Heart right ventricle (tissue), 16 donors: ENCODE measurements at regions of chr6 and their contacts with region 1.

Region 1: GRCh38 chr6:41779793-41780545 is at the start of gene FRS3:
- DNase-seq: peak; percentile 98 to 100
- ATAC-seq: peak; percentile 92 to 97 (median 94)
- H3K4me3 ChIP-seq: peak within 1 kb of the TSS; percentile 65 to 99 (median 90)
- H3K27ac ChIP-seq: peak within 1 kb of the TSS; percentile 66 to 99 (median 94)
- H3K4me1 ChIP-seq: peaks cover 11 to 59% (median 35%) of the 10 kb centered on the region in 9 donors
- H3K27me3 ChIP-seq: no peaks in the 10 kb centered on the region
- CTCF ChIP-seq: peak; percentile 87 to 98 (median 94)
- total RNA-seq, gene FRS3: 4.1 to 8.7 (median 5.8) TPM

Region 2: DNA sequence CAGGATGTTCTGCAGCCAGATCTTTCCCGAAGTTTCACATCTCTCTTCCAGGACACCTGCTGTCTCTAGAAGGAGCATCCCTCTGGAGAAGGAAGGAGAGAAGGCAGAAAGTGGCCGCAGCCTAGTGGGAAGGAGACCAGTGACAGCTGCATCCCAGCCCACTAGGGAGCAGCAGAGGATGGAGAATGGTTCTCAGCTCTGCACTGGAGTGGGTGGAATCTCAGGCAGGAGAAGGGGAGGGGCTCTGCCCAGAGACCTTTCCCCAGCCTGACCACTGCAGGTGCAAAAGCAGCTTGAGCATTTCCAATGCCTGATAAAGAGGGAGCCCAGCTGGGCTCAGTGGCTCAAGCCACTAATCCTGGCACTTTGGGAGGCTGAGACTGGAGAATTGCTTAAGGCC is 412.3 kb before region 1 on chr6:
- intact Hi-C with region 1: loop called in 5 of 10 experiments (anchors 5 to 10 kb)
- DNase-seq: peak; percentile 25 to 56
- ATAC-seq: peak in 7 of 8 donors; percentile 59 to 80 (median 76)
- H3K4me3 ChIP-seq: no peak overlapping the region
- H3K27ac ChIP-seq: no peak overlapping the region
- H3K4me1 ChIP-seq: peaks cover 0 to 26% (median 16%) of the 10 kb centered on the region in 9 donors
- H3K27me3 ChIP-seq: peaks cover 0 to 96% (median 66%) of the 10 kb centered on the region in 7 donors
- CTCF ChIP-seq: peak; percentile 20 to 76 (median 59)

Region 3: DNA sequence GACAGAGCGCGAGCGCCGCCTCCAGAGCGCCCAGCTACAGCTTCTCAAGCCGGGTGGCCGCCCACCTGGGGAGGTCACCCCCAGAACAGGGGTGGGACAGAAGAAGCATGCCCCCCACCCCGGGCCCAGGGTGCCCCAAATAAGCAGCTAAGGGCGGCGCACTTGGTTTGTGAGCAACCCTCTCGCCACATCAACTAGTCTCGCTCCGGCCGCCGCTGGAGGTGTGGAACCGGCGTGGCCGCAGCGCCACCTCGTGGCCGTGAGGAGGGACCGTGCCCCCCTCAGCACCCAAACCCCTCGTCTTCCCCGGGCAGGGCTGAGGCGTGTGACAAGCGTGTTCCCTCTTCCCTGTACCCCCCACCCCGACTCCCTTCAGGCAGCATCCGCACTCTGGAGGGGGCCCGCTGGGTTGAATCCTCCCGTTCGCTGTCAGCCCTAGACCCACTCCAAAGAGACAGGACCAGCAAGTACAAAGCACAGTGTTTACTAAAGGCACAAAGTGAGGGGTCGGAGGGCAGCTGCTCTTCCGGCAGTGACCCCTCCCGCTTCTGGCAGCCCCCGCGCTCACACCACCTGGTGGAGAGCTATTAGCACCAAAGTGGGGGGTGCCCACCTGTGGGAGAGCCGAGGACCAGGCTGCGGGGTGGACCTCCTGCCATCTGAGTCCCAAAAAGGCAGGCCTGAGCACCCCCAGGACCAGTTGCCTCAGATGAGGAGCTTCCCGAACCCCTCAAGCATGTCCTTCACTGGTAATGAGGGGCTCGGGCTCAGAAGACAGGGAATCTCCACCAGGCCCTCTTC is 96.3 kb before region 1 on chr6:
- intact Hi-C with region 1: loop called in 3 of 10 experiments (anchors 10 kb)
- DNase-seq: peak; percentile 81 to 86
- ATAC-seq: peak; percentile 81 to 89 (median 85)
- H3K4me3 ChIP-seq: peak overlapping the region; percentile 15 to 68 (median 54)
- H3K27ac ChIP-seq: peak overlapping the region; percentile 53 to 97 (median 86)
- H3K4me1 ChIP-seq: peaks cover 5 to 37% (median 23%) of the 10 kb centered on the region in 9 donors
- H3K27me3 ChIP-seq: no peaks in the 10 kb centered on the region
- CTCF ChIP-seq: peak; percentile 88 to 97 (median 96)

Region 4: DNA sequence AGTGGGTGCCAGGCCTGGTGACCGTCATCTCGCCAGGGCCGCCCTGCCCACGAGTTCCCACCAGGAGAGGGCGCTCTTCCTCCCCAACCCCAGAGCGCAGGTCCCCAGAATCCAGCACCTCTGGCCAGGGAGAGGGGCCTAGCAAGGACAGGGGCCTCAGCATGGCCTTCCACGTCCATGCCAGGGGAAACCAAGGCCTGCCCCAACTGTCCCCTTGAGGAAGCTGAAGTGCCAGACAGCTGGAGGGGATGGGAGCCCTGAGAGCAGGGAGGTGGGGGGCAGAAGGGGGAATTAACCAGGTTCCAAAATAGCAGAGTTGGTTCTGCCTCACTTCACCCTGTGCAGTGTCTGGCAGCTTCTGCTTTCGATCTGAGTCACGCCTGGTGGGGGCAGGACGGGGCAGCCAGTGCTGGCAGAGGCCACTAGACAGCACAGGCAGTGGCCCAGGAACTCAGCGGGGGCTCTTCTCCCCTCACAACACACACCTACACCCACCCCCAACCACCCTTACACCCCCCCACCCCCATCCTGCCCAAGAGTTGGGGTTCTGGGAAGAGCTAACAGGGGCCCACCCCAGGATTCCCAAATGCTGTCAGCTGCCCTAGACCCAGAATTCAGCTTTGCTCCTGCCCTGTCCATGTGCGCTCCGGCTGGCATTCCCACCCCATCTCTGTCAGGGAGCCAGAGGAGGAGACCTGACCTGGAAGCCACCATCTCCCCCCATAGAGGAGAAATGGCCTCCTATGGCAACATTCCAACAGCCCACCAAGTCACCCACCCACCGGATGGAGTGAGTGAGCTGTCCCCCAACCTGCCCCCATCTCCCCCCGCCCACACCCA is 73.8 kb before region 1 on chr6:
- intact Hi-C with region 1: loop called in 1 of 10 experiments (anchors 5 kb)
- DNase-seq: peak; percentile 83 to 87
- ATAC-seq: peak; percentile 85 to 93 (median 90)
- H3K4me3 ChIP-seq: peak overlapping the region in 1 of 10 donors; percentile 33
- H3K27ac ChIP-seq: peak overlapping the region; percentile 62 to 92 (median 81)
- H3K4me1 ChIP-seq: peaks cover 31 to 96% (median 66%) of the 10 kb centered on the region in 9 donors
- H3K27me3 ChIP-seq: no peaks in the 10 kb centered on the region
- CTCF ChIP-seq: peak; percentile 53 to 82 (median 76)

Region 5: GRCh38 chr6:41746107-41746506 is 33.9 kb before region 1 on chr6:
- intact Hi-C with region 1: no loop called
- DNase-seq: no peak
- ATAC-seq: no peak
- H3K4me3 ChIP-seq: no peak overlapping the region
- H3K27ac ChIP-seq: no peak overlapping the region
- H3K4me1 ChIP-seq: no peaks in the 10 kb centered on the region
- H3K27me3 ChIP-seq: no peaks in the 10 kb centered on the region
- CTCF ChIP-seq: no peak

Region 6: DNA sequence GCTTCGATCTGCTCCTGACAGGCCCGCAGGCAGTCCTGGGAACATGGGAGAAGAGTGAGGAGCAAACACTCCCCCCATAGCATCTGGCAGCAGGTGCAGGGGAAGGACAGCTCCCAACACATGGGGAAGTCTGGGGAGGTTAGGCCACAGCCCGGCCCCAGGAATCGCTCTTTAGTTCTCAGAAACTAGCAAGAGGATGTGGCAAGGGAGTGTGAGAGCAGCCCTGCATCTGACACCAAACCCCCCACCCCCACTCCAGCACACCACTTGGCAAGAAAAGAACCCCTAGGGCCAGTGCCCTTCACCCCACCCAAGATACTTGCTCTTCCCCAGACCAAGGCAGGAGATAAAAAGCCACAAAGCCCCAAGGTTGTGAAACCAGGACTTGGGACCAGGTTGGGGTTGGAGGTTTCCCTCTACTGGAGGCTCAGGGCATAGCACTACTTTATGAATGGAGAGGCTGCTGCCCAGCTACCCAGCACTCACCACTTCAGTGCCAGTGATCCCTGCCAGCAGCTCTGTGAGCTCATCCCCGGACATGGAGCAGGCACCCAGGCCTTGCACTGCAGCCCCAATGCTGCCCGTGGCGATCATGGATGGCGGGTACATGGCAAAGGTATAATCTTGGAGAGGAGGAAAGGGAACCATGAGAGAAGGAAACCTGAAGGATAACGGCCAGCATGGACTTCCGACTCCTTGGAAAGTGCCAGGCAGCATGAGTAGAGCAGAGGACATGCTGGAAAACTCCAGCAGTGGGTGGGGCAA is 156.3 kb after region 1 on chr6:
- intact Hi-C with region 1: loop called in 5 of 10 experiments (anchors 5 kb)
- DNase-seq: peak; percentile 56 to 81
- ATAC-seq: peak; percentile 46 to 79 (median 70)
- H3K4me3 ChIP-seq: peak overlapping the region in 1 of 10 donors; percentile 11
- H3K27ac ChIP-seq: peak overlapping the region in 8 of 10 donors; percentile 11 to 94 (median 88)
- H3K4me1 ChIP-seq: peaks cover 26 to 64% (median 49%) of the 10 kb centered on the region in 9 donors
- H3K27me3 ChIP-seq: no peaks in the 10 kb centered on the region
- CTCF ChIP-seq: peak; percentile 67 to 85 (median 81)

Region 7: GRCh38 chr6:42166444-42167141 is 386.6 kb after region 1 on chr6:
- intact Hi-C with region 1: loop called in 2 of 10 experiments (anchors 5 to 10 kb)
- DNase-seq: peak; percentile 27 to 63
- ATAC-seq: peak; percentile 45 to 80 (median 78)
- H3K4me3 ChIP-seq: no peak overlapping the region
- H3K27ac ChIP-seq: no peak overlapping the region
- H3K4me1 ChIP-seq: no peaks in the 10 kb centered on the region
- H3K27me3 ChIP-seq: no peaks in the 10 kb centered on the region
- CTCF ChIP-seq: peak; percentile 89 to 97 (median 94)